Left cardiac atrium (tissue), 4 donors: ENCODE measurements at regions of chr9 and their contacts with region 1.

Region 1: GRCh38 chr9:116572095-116572748 is 114.9 kb upstream of the TRIM32 start:
- DNase-seq: peak; percentile 93
- ATAC-seq: peak; percentile 97 to 99

Region 2: DNA sequence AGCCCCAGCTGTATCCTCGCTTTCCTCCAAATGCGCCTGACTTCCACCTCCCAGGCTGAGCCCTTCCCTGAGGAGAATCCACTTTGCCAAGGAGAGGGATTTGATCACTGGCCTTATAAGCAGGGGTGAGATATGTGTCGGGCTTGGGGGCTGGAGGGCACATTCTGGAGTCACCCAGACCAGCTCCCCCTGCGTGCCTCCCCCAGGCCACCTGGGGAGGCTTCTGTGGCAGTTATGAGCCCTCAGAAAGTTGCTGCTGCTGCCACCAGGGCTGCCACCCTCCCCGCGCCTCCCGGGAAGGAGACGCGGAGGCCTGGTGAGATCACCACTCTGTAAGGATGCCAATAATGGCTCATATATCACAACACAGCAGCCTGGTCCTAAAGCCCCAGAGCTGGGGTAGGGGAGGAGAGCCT is 207.2 kb before region 1 on chr9:
- intact Hi-C with region 1: loop called in 1 of 2 experiments (anchors 10 kb)
- DNase-seq: peak; percentile 67
- ATAC-seq: peak; percentile 93 to 95

Region 3: GRCh38 chr9:116646661-116647512 is 74.7 kb after region 1 on chr9:
- intact Hi-C with region 1: loop called in 1 of 2 experiments (anchors 5 kb)
- DNase-seq: no peak
- ATAC-seq: peak; percentile 81 to 85